ENCODE measurements at regions of chr17 and their contacts with region 1.

Region 1: GRCh38 chr17:7435221-7435675 is at the start of gene TMEM102:
- DNase-seq: peak; percentile 99
- ATAC-seq: peak; percentile 84
- H3K4me3 Mint-ChIP-seq: peak within 1 kb of the TSS; percentile 92
- H3K27ac Mint-ChIP-seq: peak within 1 kb of the TSS; percentile 92
- H3K4me1 Mint-ChIP-seq: peaks cover 33% of the 10 kb centered on the region
- H3K27me3 Mint-ChIP-seq: peaks cover 11% of the 10 kb centered on the region
- total RNA-seq, gene TMEM102: 8.7 to 10.7 TPM

Region 2: GRCh38 chr17:7239091-7240027 is 195.9 kb before region 1 on chr17 and contains the start of gene PHF23:
- CTCF ChIA-PET with region 1: no interaction called
- POLR2A ChIA-PET with region 1: no interaction called
- intact Hi-C with region 1: loop called in 1 of 2 experiments (anchors 1 kb)
- DNase-seq: peak; percentile 99
- ATAC-seq: peak; percentile 74
- H3K4me3 Mint-ChIP-seq: peak within 1 kb of the TSS; percentile 97
- H3K27ac Mint-ChIP-seq: peak within 1 kb of the TSS; percentile 93
- H3K4me1 Mint-ChIP-seq: peaks cover 61% of the 10 kb centered on the region
- H3K27me3 Mint-ChIP-seq: no peaks in the 10 kb centered on the region
- total RNA-seq, gene PHF23: 23.6 to 35.2 TPM

Region 3: DNA sequence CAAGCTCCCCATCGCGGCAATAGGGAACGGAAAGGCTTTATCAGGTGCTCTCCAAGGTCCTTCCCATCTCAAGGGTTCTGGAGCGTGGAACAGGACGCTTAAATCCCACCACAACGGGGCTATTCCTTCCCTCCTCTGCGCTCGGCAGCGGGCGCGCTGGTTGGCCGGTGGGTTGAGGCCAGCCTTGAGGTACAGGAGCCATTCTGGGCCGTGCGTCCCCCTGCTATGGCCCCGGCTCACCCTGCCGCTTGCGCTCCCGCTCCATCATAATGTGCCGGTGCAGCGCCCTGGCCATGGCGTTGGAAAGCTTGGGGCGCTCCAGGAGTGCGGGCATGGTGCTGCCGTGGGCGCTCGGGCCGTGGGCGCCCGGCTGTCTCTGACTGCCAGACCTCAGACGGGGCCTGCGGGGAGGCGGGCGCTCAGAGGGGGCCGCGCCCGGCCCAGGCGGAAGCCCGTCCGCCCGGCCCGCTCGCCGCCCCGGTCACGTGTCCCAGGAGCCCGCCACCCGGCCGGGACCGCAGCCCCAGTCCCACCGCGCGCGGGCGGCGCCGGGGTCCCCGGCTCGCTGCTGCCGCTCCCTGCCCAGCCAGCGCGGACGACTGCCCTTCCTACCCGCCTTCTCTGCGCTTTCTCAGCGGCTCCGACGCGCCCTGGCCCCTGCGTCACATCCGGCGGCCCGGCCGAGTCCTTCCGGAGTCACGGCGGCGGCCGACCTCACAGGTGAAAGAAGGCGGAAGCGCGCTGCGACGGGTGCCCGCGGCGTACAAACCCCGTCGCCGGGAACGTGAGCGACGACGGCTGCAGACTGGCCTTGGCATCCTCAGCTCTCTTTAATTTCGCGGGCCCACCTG is 120.3 kb before region 1 on chr17 and contains the start of gene GPS2:
- CTCF ChIA-PET with region 1: interaction called, 3 read pairs
- POLR2A ChIA-PET with region 1: interaction called, 3 read pairs
- intact Hi-C with region 1: loop called in 1 of 2 experiments (anchors 1 kb)
- DNase-seq: peak; percentile 97
- ATAC-seq: peak; percentile 82
- H3K4me3 Mint-ChIP-seq: peak within 1 kb of the TSS; percentile 77
- H3K27ac Mint-ChIP-seq: peak within 1 kb of the TSS; percentile 84
- H3K4me1 Mint-ChIP-seq: peaks cover 48% of the 10 kb centered on the region
- H3K27me3 Mint-ChIP-seq: no peaks in the 10 kb centered on the region
- total RNA-seq, gene GPS2: 31.3 to 56.1 TPM

Region 4: DNA sequence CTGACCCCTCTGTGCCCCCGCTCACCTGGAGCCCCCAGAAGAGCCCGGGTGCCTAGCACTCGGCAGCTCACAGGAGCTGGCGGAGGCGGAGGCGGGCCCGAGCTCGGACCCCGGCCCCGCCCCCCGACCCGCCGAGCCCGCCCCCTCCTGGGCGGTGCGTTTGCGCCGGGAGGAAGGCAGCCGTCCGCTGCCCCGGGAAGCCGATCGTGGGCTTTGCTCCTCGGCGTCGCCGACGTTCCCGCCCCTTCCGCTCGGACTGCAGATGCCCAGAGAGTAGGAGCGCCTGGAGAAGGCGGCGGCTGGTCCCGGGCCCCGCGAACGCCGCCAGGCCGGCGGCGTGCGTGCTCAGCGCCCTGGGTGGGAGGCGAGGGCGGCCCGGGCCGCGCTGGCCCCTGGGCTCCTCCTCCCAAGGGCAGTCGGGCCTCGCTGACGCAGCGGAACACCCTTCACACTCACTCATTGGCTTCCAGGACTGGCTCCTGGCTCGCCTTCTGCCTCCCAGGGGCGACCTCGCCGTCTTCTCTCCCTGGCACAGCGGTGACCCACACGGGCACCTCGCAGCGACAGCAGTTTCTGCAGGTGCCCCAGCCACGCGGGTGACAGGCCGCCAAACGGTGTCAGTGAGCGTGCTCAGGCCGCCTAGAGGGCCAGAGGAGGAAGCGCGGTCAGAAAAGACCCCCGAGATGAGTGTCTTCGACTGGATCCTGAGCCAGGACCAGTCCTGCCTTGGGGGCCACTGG is 40.6 kb before region 1 on chr17 and contains the start of gene PLSCR3:
- CTCF ChIA-PET with region 1: interaction called, 4 read pairs
- POLR2A ChIA-PET with region 1: no interaction called
- intact Hi-C with region 1: loop called in 1 of 2 experiments (anchors 1 kb)
- DNase-seq: peak; percentile 90
- ATAC-seq: peak; percentile 86
- H3K4me3 Mint-ChIP-seq: peak within 1 kb of the TSS; percentile 88
- H3K27ac Mint-ChIP-seq: peak within 1 kb of the TSS; percentile 95
- H3K4me1 Mint-ChIP-seq: peaks cover 26% of the 10 kb centered on the region
- H3K27me3 Mint-ChIP-seq: no peaks in the 10 kb centered on the region
- total RNA-seq, gene PLSCR3: 69.3 to 78.9 TPM

Region 5: GRCh38 chr17:7530023-7530900 is 95.0 kb after region 1 on chr17:
- CTCF ChIA-PET with region 1: no interaction called
- POLR2A ChIA-PET with region 1: no interaction called
- intact Hi-C with region 1: no loop called
- DNase-seq: no peak
- ATAC-seq: no peak
- H3K4me3 Mint-ChIP-seq: no peak overlapping the region
- H3K27ac Mint-ChIP-seq: no peak overlapping the region
- H3K4me1 Mint-ChIP-seq: no peaks in the 10 kb centered on the region
- H3K27me3 Mint-ChIP-seq: no peaks in the 10 kb centered on the region

Region 6: DNA sequence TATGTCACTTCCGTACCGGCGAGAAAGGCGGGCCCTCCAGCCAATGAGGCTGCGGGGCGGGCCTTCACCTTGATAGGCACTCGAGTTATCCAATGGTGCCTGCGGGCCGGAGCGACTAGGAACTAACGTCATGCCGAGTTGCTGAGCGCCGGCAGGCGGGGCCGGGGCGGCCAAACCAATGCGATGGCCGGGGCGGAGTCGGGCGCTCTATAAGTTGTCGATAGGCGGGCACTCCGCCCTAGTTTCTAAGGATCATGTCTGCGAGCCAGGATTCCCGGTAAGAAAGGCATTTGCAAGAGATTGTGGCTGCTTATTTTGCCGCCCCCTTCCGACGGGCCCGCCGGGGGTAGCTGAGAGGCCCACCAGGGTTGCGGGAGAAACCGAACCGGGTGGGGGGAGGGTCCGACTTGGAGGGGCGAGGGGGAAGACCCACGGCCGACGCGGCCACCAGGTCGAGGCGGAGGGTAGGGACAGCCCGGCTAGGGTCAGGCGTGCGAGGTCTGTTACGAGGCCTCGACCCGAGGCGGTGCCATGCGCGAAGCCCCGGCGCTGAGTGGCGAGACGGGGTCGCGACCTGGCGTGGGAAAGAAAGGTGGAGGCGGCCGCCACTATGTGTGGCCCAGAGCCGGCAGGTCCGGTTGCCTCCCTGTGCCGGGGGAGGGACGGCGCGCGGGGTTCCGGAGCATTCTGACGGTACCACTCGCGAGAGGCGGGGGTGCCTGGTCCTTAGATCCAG is 137.5 kb after region 1 on chr17:
- CTCF ChIA-PET with region 1: interaction called, 4 read pairs
- POLR2A ChIA-PET with region 1: interaction called, 3 read pairs
- intact Hi-C with region 1: loop called in 1 of 2 experiments (anchors 1 kb)
- DNase-seq: peak; percentile 100
- ATAC-seq: peak; percentile 92
- H3K4me3 Mint-ChIP-seq: peak overlapping the region; percentile 94
- H3K27ac Mint-ChIP-seq: peak overlapping the region; percentile 99
- H3K4me1 Mint-ChIP-seq: peaks cover 51% of the 10 kb centered on the region
- H3K27me3 Mint-ChIP-seq: no peaks in the 10 kb centered on the region

Region 7: GRCh38 chr17:7844292-7845154 is 409.3 kb after region 1 on chr17:
- CTCF ChIA-PET with region 1: no interaction called
- POLR2A ChIA-PET with region 1: no interaction called
- intact Hi-C with region 1: loop called in 1 of 2 experiments (anchors 2 kb)
- DNase-seq: peak; percentile 92
- ATAC-seq: peak; percentile 51
- H3K4me3 Mint-ChIP-seq: peak overlapping the region; percentile 97
- H3K27ac Mint-ChIP-seq: peak overlapping the region; percentile 96
- H3K4me1 Mint-ChIP-seq: peaks cover 40% of the 10 kb centered on the region
- H3K27me3 Mint-ChIP-seq: no peaks in the 10 kb centered on the region

Measured in activated CD4-positive, alpha-beta T cell treated with anti-CD3 and anti-CD28 coated beads for 36 hours (primary cell).